ENCODE measurements at regions of chr5 and their contacts with region 1.

Region 1: DNA sequence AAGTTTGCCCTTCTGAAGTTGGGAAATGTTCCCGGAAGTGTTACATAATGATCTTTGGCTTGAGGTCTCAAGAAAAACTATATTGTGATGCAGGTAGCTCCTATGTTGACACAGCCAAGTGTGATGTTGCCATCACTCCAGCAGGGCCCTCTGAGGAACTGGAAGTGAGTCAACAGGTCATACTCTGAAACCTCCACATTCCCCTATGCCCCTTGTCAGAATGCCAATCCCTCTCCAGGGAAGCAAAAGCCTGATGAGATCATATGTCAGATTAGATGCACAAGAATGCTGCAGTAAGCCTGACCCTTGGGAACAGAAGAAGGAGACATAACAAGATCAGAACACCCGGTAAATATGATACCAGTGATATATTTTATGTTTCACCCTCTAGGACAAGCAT is 66.8 kb upstream of the ITGA2 start:
- DNase-seq: no peak

Region 2: DNA sequence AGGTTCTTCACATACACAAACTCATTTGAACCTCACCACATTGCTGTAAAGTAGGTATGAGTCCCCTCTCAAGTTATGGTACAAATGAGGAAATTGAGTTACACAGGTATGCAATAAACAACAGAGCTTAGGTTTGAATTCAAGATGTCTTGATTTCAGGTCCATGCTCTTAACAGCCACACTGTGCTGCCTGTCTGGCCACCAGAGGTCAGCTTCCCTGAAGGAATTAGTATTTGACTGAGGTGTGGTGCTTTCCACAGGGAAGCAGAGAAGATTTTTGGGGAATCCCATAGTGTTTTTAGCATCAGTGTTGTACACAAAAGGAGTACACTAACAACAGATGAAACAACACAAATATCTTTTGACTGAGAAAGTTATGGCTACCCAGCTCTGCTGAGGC is 229.1 kb before region 1 on chr5:
- intact Hi-C with region 1: loop called in 1 of 2 experiments (anchors 10 kb)
- DNase-seq: peak; percentile 57

Measured in posterior vena cava (tissue), 2 donors.